ENCODE measurements at regions of chr6 and their contacts with region 1.

Region 1: GRCh38 chr6:27518881-27519795 is 46.2 kb upstream of the ZNF184 start:
- DNase-seq: peak; percentile 43 to 55
- ATAC-seq: peak; percentile 87 to 97 (median 94)
- H3K4me3 ChIP-seq: peak overlapping the region; percentile 52 to 94 (median 72)
- H3K27ac ChIP-seq: peak overlapping the region; percentile 27 to 89 (median 81)
- H3K4me1 ChIP-seq: peaks cover 0 to 12% (median 7%) of the 10 kb centered on the region in 9 donors
- H3K27me3 ChIP-seq: peaks cover 0 to 29% (median 22%) of the 10 kb centered on the region in 7 donors
- CTCF ChIP-seq: peak; percentile 49 to 80 (median 65)

Region 2: GRCh38 chr6:27157459-27158315 is 361.5 kb before region 1 on chr6:
- intact Hi-C with region 1: loop called in 1 of 10 experiments (anchors 10 kb)
- DNase-seq: peak; percentile 62 to 65
- ATAC-seq: peak in 7 of 8 donors; percentile 64 to 92 (median 80)
- H3K4me3 ChIP-seq: peak overlapping the region; percentile 5 to 54 (median 44)
- H3K27ac ChIP-seq: peak overlapping the region in 1 of 10 donors; percentile 11
- H3K4me1 ChIP-seq: peaks cover 0 to 17% (median 9%) of the 10 kb centered on the region in 9 donors
- H3K27me3 ChIP-seq: peaks cover 0 to 18% (median 0%) of the 10 kb centered on the region in 7 donors
- CTCF ChIP-seq: peak in 8 of 9 donors; percentile 7 to 75 (median 60)

Region 3: GRCh38 chr6:27188885-27189418 is 330.2 kb before region 1 on chr6:
- intact Hi-C with region 1: loop called in 1 of 10 experiments (anchors 10 kb)
- DNase-seq: peak in 1 of 2 donors; percentile 59
- ATAC-seq: peak; percentile 88 to 97 (median 93)
- H3K4me3 ChIP-seq: peak overlapping the region; percentile 38 to 73 (median 64)
- H3K27ac ChIP-seq: peak overlapping the region in 9 of 10 donors; percentile 49 to 80 (median 63)
- H3K4me1 ChIP-seq: peaks cover 0 to 12% (median 4%) of the 10 kb centered on the region in 9 donors
- H3K27me3 ChIP-seq: peaks cover 0 to 10% (median 0%) of the 10 kb centered on the region in 7 donors
- CTCF ChIP-seq: peak; percentile 70 to 87 (median 79)

Region 4: GRCh38 chr6:27394073-27394472 is 125.1 kb before region 1 on chr6:
- intact Hi-C with region 1: no loop called
- DNase-seq: no peak
- ATAC-seq: no peak
- H3K4me3 ChIP-seq: no peak overlapping the region
- H3K27ac ChIP-seq: no peak overlapping the region
- H3K4me1 ChIP-seq: peaks cover 0 to 6% (median 0%) of the 10 kb centered on the region in 9 donors
- H3K27me3 ChIP-seq: no peaks in the 10 kb centered on the region
- CTCF ChIP-seq: no peak

Region 5: DNA sequence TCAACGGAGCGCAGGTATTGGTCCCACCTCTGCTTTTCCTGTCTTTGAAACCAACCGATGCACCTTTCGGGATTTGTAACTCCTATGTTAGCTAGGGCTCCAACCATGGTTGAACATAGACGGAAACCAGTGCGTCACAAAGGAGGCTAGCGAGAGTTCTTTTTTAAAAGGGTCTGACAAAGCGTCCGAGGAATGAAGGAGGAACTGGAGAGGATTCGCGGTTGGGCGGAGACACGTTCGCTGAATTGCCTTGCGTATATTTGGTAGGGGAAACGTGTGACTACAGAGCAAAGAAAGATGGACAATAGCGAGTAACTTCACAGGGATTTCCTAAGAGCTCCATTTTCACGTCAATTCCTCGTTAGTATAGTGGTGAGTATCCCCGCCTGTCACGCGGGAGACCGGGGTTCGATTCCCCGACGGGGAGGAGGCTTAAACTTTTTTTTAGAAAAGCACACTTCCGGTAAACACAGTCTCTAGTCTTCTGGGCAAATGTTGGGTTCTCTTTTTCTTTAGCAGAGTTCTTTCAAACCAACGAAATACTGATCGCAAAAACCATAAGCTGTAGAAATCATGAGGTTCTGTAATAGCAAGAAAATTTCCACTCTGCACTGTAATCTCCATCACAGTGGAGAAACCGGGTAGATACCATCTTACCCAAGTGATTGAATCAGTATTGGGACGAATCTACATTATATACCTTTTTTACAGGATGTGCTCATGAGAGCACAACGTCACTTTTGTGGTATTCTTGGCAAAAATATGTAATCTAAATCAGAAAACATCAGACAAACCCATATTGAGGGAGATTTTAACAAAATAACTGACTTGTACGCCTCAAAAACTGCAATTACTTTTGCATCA is 39.6 kb before region 1 on chr6:
- intact Hi-C with region 1: loop called in 1 of 10 experiments (anchors 2 kb)
- DNase-seq: peak; percentile 76 to 79
- ATAC-seq: peak; percentile 93 to 97 (median 95)
- H3K4me3 ChIP-seq: peak overlapping the region; percentile 51 to 85 (median 72)
- H3K27ac ChIP-seq: peak overlapping the region; percentile 86 to 97 (median 96)
- H3K4me1 ChIP-seq: peaks cover 0 to 21% (median 8%) of the 10 kb centered on the region in 9 donors
- H3K27me3 ChIP-seq: no peaks in the 10 kb centered on the region
- CTCF ChIP-seq: no peak

Region 6: DNA sequence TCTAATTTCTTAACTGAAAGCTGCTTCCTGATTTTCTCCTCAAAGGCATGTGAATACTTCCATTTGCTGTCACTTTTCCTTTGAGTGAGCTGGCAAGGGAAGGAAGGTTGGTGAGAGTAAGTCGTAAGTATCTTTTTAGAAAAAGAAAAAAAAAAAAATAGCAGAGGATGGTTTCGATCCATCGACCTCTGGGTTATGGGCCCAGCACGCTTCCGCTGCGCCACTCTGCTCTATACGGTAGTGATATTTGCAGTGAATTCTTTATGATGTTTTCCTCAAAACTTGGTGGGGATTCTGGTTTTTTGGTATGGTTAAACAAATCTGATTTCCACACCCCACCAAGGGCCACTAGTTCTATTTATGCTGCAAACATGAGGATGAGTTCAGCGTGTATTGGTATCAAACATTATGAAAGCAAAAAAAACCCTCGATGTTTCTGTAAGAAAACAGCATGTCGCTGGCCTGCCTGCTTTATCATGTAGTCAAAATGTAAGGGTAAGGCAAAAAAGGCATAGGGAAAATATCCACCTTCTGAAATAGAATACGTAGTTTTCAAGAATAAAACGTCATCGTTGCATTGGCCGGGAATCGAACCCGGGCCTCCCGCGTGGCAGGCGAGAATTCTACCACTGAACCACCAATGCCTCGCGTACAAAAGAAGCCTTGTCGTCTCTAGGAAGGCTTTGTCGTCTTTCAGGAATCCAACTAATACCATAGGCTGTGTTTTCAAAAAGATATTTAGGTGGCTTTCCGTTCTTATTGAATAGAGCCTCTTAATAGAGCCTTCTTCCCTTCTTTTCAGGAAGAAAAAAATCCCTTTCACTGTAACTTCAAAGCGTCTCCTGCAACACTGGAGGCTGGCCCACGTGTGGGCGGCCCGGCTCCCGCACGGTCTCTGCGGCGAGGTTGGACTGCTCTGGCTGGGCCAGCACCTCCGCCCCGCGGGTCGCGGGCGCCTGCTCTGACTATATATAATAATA is 383.5 kb after region 1 on chr6:
- intact Hi-C with region 1: loop called in 5 of 10 experiments (anchors 5 to 10 kb)
- DNase-seq: peak; percentile 76 to 90
- ATAC-seq: peak; percentile 93 to 99 (median 96)
- H3K4me3 ChIP-seq: peak overlapping the region; percentile 31 to 64 (median 58)
- H3K27ac ChIP-seq: peak overlapping the region in 9 of 10 donors; percentile 12 to 79 (median 68)
- H3K4me1 ChIP-seq: peaks cover 0 to 13% (median 0%) of the 10 kb centered on the region in 9 donors
- H3K27me3 ChIP-seq: peaks cover 0 to 4% (median 0%) of the 10 kb centered on the region in 7 donors
- CTCF ChIP-seq: no peak